PC-9 (cell line): ENCODE measurements at regions of chr1 and their contacts with region 1.

Region 1: GRCh38 chr1:202677433-202677832 is 32.8 kb downstream of the SYT2 start:
- DNase-seq: no peak
- H3K4me3 ChIP-seq: no peak overlapping the region
- H3K27ac ChIP-seq: no peak overlapping the region
- H3K4me1 ChIP-seq: no peaks in the 10 kb centered on the region
- H3K27me3 ChIP-seq: peaks cover 74% of the 10 kb centered on the region
- CTCF ChIP-seq: no peak

Region 2: DNA sequence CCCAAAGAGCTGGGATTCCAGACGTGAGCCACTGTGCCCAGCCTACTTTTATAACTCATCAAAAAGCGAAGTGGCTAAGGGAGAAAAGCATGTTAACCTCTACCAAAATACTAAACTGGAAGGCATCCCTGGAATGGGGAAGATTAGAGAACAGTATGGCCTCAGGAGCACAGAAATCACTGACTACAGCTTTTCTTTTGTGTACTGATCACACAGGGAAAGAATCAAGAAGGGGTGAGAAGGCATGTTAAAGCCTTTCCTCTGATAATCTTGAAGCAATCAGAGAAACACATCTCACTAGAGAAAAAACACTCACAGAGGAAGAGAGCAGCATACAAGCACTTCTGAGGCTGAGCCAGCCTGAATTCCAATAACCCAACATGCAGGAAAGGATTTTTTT is 144.0 kb after region 1 on chr1:
- CTCF ChIA-PET with region 1: no interaction called
- POLR2A ChIA-PET with region 1: no interaction called
- intact Hi-C with region 1: no loop called
- DNase-seq: peak; percentile 40 to 91
- H3K4me3 ChIP-seq: no peak overlapping the region
- H3K27ac ChIP-seq: peak overlapping the region; percentile 72
- H3K4me1 ChIP-seq: peaks cover 16% of the 10 kb centered on the region
- H3K27me3 ChIP-seq: no peaks in the 10 kb centered on the region
- CTCF ChIP-seq: no peak

Region 3: GRCh38 chr1:204356997-204357396 is 1679.6 kb after region 1 on chr1:
- CTCF ChIA-PET with region 1: no interaction called
- POLR2A ChIA-PET with region 1: interaction called, 35 read pairs
- intact Hi-C with region 1: no loop called
- DNase-seq: no peak
- H3K4me3 ChIP-seq: no peak overlapping the region
- H3K27ac ChIP-seq: no peak overlapping the region
- H3K4me1 ChIP-seq: no peaks in the 10 kb centered on the region
- H3K27me3 ChIP-seq: no peaks in the 10 kb centered on the region
- CTCF ChIP-seq: no peak